GM12878 (cell line): ENCODE measurements at regions of chr17 and their contacts with region 1.

Region 1: DNA sequence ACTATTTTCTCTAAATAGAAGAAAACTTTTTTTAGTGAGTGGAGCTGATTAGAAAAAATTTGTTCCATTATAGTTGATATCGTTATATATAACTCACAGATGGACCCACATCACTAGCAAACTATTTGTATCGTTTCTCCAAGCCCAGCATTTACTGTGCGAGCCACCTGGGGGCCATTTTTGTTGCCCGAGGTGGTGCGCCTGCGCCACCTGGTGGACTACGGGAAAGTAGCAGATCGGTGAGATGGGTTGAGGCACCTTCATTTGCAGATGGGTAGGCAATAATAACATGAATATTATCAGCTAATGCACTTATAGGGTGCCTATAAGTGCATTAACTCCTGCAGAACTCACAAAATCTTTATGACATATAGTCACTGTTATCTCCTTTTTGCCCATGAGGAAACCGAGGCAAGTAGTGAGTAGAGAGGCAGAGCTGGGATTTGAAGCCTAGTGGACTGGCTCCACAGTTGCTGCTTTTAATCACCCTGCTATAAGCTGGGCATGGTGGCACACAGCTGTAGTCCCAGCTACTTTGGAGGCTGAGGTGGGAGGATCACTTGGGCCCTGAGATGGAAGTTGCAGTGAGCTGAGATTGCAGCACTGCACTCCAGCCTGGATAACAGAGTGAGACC is 23.2 kb upstream of the NTN1 start:
- DNase-seq: peak; percentile 40
- ATAC-seq: peak; percentile 86
- H3K4me3 ChIP-seq: no peak overlapping the region
- H3K27ac ChIP-seq: no peak overlapping the region
- H3K4me1 ChIP-seq: peaks cover 21% of the 10 kb centered on the region
- H3K27me3 ChIP-seq: peaks cover 4 to 5% of the 10 kb centered on the region in 2 experiments; a peak in 3 of 4 replicates
- CTCF ChIP-seq: peak; percentile 96 to 99 (median 96); a peak in 5 of 6 replicates
- EP300 ChIP-seq: no peak
- POLR2A ChIP-seq: no peak
- RAD21 ChIP-seq: peak; percentile 100

Region 2: GRCh38 chr17:8753976-8754440 is 244.1 kb before region 1 on chr17:
- CTCF ChIA-PET with region 1: interaction called, 26 read pairs
- POLR2A ChIA-PET with region 1: no interaction called
- RAD21 ChIA-PET with region 1: interaction called, 5 read pairs
- SMC1A ChIA-PET with region 1: interaction called, 7 read pairs
- in situ Hi-C with region 1: loop called (anchors 5 kb)
- intact Hi-C with region 1: loop called (anchors 2 kb)
- DNase-seq: no peak
- ATAC-seq: peak; percentile 83
- H3K4me3 ChIP-seq: no peak overlapping the region
- H3K27ac ChIP-seq: no peak overlapping the region
- H3K4me1 ChIP-seq: no peaks in the 10 kb centered on the region
- H3K27me3 ChIP-seq: no peaks in the 10 kb centered on the region; a peak in 1 of 4 replicates
- CTCF ChIP-seq: peak; percentile 56 to 67 (median 58); a peak in 5 of 6 replicates
- EP300 ChIP-seq: no peak
- POLR2A ChIP-seq: no peak
- RAD21 ChIP-seq: peak; percentile 57

Region 3: GRCh38 chr17:8806926-8807550 is 191.1 kb before region 1 on chr17:
- CTCF ChIA-PET with region 1: interaction called, 12 read pairs
- POLR2A ChIA-PET with region 1: no interaction called
- RAD21 ChIA-PET with region 1: interaction called, 5 read pairs
- SMC1A ChIA-PET with region 1: interaction called, 9 read pairs
- in situ Hi-C with region 1: no loop called
- intact Hi-C with region 1: loop called (anchors 10 kb)
- DNase-seq: peak; percentile 98
- ATAC-seq: peak; percentile 96
- H3K4me3 ChIP-seq: no peak overlapping the region; the same call in 1 of the 2 replicates
- H3K27ac ChIP-seq: peak overlapping the region; percentile 96
- H3K4me1 ChIP-seq: peaks cover 43% of the 10 kb centered on the region
- H3K27me3 ChIP-seq: no peaks in the 10 kb centered on the region
- CTCF ChIP-seq: no peak
- EP300 ChIP-seq: peak; percentile 56 to 62; a peak in 3 of 4 replicates
- POLR2A ChIP-seq: peak; percentile 71
- RAD21 ChIP-seq: no peak

Region 4: DNA sequence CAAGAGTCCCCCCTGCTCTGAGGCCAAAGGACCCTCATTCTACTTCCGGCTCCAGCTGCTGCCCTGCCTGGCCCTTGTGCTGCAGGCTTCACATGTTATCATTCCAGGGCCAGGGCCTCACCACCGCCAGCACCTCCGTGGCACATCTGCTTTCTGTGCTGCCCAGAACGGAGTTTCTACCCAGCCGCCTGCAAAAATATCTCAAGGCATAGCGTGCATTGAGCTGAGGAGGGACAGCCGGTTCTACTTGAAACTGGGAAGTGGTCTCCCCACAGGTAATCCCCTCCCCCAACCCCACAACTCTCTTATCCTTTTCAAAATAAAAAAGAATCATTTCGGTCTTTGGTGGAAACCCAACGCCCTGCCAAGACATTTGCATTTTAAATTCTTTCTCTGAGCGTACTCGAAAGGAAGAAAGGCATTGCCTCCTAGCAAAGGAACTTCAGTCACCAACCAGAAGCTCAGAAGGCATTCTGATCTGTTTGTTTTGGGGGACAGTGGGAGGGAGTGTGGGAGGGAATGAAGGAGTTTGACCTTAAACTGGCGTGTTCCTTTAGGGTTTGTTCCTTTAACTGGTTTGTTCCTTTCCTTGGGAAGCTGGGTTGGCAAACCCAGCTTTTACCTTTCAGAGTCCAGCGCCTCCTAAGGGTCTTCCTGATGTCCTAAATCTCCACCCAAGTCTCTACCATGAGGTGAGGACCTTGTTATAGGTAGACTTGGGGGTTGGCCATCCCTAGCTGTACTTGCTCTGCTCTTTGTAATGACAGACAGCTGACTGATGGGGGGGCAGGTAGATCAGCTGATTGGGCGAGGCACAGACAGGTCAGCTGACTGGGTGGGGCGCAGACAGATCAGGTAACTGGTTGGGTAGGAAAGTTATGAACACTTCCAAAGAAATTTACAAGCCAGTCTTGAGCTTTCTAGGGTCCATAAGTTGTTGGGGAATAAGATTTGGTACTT is 97.2 kb before region 1 on chr17:
- CTCF ChIA-PET with region 1: interaction called, 162 read pairs
- POLR2A ChIA-PET with region 1: interaction called, 4 read pairs
- RAD21 ChIA-PET with region 1: interaction called, 52 read pairs
- SMC1A ChIA-PET with region 1: interaction called, 37 read pairs
- in situ Hi-C with region 1: no loop called
- intact Hi-C with region 1: loop called (anchors 1 kb)
- DNase-seq: peak; percentile 84
- ATAC-seq: peak; percentile 60
- H3K4me3 ChIP-seq: peak overlapping the region; percentile 6; the same call in 1 of the 2 replicates
- H3K27ac ChIP-seq: peak overlapping the region; percentile 86
- H3K4me1 ChIP-seq: peaks cover 60% of the 10 kb centered on the region
- H3K27me3 ChIP-seq: no peaks in the 10 kb centered on the region
- CTCF ChIP-seq: peak; percentile 16 to 18 (median 17); a peak in 2 of 6 replicates
- EP300 ChIP-seq: peak; percentile 84 to 97
- POLR2A ChIP-seq: peak; percentile 51; the same call in 1 of the 2 replicates
- RAD21 ChIP-seq: peak; percentile 11

Region 5: GRCh38 chr17:8960325-8961140 is 37.6 kb before region 1 on chr17:
- CTCF ChIA-PET with region 1: interaction called, 44 read pairs
- POLR2A ChIA-PET with region 1: interaction called, 3 read pairs
- RAD21 ChIA-PET with region 1: interaction called, 14 read pairs
- SMC1A ChIA-PET with region 1: interaction called, 12 read pairs
- in situ Hi-C with region 1: no loop called
- intact Hi-C with region 1: loop called (anchors 5 kb)
- DNase-seq: no peak
- ATAC-seq: peak; percentile 10
- H3K4me3 ChIP-seq: peak overlapping the region; percentile 57; the same call in 1 of the 2 replicates
- H3K27ac ChIP-seq: peak overlapping the region; percentile 81
- H3K4me1 ChIP-seq: peaks cover 61% of the 10 kb centered on the region
- H3K27me3 ChIP-seq: no peaks in the 10 kb centered on the region
- CTCF ChIP-seq: no peak
- EP300 ChIP-seq: no peak
- POLR2A ChIP-seq: peak; percentile 38; the same call in 1 of the 2 replicates
- RAD21 ChIP-seq: no peak

Region 6: GRCh38 chr17:9291912-9292560 is 293.9 kb after region 1 on chr17:
- CTCF ChIA-PET with region 1: interaction called, 29 read pairs
- POLR2A ChIA-PET with region 1: no interaction called
- RAD21 ChIA-PET with region 1: interaction called, 15 read pairs
- SMC1A ChIA-PET with region 1: interaction called, 7 read pairs
- in situ Hi-C with region 1: no loop called
- intact Hi-C with region 1: loop called (anchors 5 kb)
- DNase-seq: no peak
- ATAC-seq: peak; percentile 78
- H3K4me3 ChIP-seq: no peak overlapping the region
- H3K27ac ChIP-seq: no peak overlapping the region
- H3K4me1 ChIP-seq: peaks cover 18% of the 10 kb centered on the region
- H3K27me3 ChIP-seq: no peaks in the 10 kb centered on the region
- CTCF ChIP-seq: peak; percentile 84 to 87 (median 84)
- EP300 ChIP-seq: no peak
- POLR2A ChIP-seq: no peak
- RAD21 ChIP-seq: peak; percentile 74